Activated CD4-positive, alpha-beta memory T cell treated with anti-CD3 and anti-CD28 coated beads for 36 hours (primary cell): ENCODE measurements at regions of chr7 and their contacts with region 1.

Region 1: DNA sequence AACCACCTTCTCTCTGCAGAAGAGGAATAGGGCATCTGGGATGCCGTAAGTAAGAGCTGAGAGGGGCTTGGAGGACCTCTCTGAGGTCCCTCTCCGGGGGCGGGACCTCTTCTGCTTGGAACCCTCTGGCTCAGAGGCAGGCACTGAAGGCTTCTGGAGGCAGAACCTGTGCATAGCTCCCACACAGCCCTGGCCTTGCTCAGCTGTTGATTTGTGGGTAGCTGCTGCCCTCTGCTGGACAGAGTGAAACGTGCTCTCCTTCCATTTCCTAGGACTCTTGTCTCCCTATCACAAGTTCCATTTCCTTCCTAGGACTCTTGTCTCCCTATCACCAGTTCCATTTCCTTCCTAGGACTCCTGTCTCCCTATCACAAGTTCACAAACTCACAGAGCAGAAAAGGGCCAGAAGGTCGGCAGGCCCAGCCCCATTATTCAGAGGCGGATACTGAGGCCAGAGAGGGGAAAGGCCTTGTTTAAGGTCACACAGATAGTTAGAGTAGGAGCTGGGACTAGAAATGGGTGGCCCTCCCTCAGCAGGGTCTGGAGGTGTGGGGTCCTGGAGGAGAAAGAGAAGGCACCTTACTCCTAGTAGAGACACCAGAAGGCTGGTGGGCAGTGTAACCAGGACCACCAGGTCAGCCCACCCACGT is 30.3 kb upstream of the GARS1 start:
- DNase-seq: peak; percentile 85
- H3K4me3 Mint-ChIP-seq: no peak overlapping the region
- H3K27ac Mint-ChIP-seq: no peak overlapping the region
- H3K4me1 Mint-ChIP-seq: peaks cover 2% of the 10 kb centered on the region
- H3K27me3 Mint-ChIP-seq: no peaks in the 10 kb centered on the region

Region 2: DNA sequence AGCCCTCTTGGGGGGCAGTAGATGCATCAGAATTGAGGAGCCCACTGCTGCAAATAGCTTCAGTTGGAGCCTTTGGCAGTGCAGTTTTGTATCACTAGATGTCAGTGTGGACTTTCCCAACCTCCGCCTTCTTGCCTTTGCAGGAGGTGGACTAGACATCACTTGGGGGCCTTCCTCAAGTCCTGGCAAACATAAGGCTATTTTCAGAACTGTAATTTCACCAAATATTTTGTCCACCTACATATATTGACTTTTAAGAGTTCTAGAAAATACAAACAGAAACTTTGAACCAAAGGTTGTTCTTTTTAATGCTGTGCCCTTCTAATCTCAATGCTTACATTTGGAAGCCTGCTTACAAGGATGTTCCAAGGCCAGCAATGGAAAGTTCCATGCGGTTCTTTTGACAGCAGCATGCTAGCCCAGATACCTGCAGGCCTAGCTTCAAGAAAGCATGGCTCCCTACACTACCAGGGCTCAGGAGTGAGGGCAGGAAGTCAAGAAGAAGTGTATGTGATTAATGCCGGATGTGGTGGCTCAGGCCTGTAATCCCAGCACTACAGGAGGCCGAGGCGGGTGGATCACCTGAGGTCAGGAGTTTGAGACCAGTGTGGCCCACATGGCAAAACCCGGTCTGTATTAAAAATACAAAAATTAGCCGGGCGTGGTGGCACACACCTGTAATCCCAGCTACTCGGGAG is 288.0 kb before region 1 on chr7:
- CTCF ChIA-PET with region 1: interaction called, 36 read pairs
- POLR2A ChIA-PET with region 1: no interaction called
- intact Hi-C with region 1: loop called (anchors 1 kb)
- DNase-seq: peak; percentile 61
- H3K4me3 Mint-ChIP-seq: no peak overlapping the region
- H3K27ac Mint-ChIP-seq: no peak overlapping the region
- H3K4me1 Mint-ChIP-seq: peaks cover 5% of the 10 kb centered on the region
- H3K27me3 Mint-ChIP-seq: no peaks in the 10 kb centered on the region

Region 3: GRCh38 chr7:30478349-30479201 is 85.8 kb before region 1 on chr7 and contains the start of gene NOD1:
- CTCF ChIA-PET with region 1: interaction called, 10 read pairs
- POLR2A ChIA-PET with region 1: interaction called, 3 read pairs
- intact Hi-C with region 1: no loop called
- DNase-seq: peak; percentile 77
- H3K4me3 Mint-ChIP-seq: peak within 1 kb of the TSS; percentile 91
- H3K27ac Mint-ChIP-seq: peak within 1 kb of the TSS; percentile 85
- H3K4me1 Mint-ChIP-seq: peaks cover 51% of the 10 kb centered on the region
- H3K27me3 Mint-ChIP-seq: no peaks in the 10 kb centered on the region
- total RNA-seq, gene NOD1: 12.8 to 14.0 TPM

Region 4: DNA sequence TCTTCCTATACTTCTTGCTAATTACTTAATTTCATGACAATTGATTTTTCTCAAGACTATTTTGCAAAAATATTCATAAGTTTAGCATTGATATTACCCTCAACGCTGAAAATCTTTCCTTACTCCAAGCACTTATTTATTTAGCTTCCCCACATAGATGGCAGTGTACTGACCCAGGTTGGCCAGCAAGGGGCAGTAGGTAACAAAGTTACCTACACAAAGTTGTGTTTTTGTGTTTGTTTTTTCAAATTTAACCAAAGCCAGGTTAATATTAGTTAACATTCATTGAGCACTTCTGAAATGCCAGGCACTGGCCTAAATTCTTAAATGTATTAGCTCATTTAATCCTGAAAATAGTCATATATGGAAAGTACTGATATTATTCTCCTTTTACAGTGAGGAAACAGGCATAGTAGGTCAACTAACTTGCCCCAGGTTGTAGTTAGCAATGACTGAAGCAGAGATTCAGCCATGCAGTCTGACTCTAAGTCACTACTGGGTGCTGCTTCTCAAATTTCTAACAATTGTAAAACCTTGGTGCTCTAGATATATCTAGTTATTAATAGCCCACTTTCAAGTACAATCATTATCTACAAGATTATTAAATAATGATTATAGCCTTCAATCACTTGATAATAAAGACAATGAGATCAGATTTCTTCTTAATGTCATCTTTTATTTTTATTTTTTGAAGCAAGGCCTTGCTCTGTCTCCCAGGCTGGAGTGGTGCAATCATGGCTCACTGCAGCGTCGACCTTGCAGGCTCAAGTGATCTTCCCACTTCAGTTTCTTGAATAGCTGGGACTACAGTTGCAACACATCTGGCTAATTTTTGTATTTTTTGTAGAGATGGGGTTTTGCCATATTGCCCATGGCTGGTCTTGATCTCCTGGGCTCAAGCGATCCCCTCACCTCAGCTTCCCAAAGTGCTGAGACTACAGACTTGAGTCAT is 54.0 kb before region 1 on chr7:
- CTCF ChIA-PET with region 1: interaction called, 74 read pairs
- POLR2A ChIA-PET with region 1: no interaction called
- intact Hi-C with region 1: loop called (anchors 1 kb)
- DNase-seq: peak; percentile 46
- H3K4me3 Mint-ChIP-seq: no peak overlapping the region
- H3K27ac Mint-ChIP-seq: no peak overlapping the region
- H3K4me1 Mint-ChIP-seq: peaks cover 9% of the 10 kb centered on the region
- H3K27me3 Mint-ChIP-seq: no peaks in the 10 kb centered on the region

Region 5: DNA sequence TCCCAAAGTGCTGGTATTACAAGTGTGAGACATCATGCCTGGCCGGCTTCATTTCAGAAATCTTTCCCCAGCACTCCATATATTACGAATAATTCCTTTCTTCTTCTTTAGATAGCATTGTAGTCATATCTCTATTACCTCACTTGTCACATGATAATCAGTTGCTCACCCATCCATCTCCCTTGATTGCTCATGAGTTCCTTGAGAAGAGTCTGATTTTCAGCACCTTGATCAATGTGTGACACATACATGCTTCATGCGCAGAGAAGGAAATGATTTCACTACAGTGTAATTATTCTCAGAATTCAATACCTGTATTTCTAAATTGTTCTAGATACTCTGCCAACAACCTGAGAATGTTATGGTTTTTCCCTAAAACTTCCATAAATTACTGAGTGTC is 33.1 kb before region 1 on chr7:
- CTCF ChIA-PET with region 1: interaction called, 13 read pairs
- POLR2A ChIA-PET with region 1: no interaction called
- intact Hi-C with region 1: no loop called
- DNase-seq: no peak
- H3K4me3 Mint-ChIP-seq: no peak overlapping the region
- H3K27ac Mint-ChIP-seq: no peak overlapping the region
- H3K4me1 Mint-ChIP-seq: peaks cover 8% of the 10 kb centered on the region
- H3K27me3 Mint-ChIP-seq: no peaks in the 10 kb centered on the region

Region 6: DNA sequence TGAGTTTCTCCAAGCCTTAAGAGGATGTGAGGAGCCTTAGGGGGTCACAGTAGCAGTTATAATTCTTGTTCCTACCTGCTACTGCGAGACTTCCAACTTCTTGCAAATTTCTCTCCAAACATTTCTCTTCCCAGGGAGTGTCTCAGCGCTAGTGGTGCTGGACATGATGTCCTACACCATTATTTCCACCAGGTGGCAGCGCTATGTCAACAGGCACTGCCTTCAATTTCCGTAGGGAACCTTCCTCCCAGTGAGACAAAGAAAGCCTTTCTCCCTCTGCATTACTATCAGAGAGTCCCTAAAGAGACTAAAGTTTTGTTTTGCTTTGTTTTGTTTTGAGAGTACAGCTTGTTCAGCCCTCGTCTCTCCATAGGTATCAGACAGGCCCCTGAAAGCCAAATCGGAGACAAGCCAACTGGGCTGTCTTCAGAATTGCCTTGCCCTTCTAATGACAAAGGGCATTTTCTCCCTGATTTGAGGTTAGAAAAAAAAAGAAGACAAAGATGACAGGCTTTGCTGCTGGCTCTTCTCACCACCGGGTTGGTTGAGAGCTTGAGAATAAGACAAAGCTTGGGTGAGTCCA is 15.5 kb before region 1 on chr7:
- CTCF ChIA-PET with region 1: interaction called, 114 read pairs
- POLR2A ChIA-PET with region 1: no interaction called
- intact Hi-C with region 1: loop called (anchors 2 kb)
- DNase-seq: peak; percentile 51
- H3K4me3 Mint-ChIP-seq: no peak overlapping the region
- H3K27ac Mint-ChIP-seq: no peak overlapping the region
- H3K4me1 Mint-ChIP-seq: no peaks in the 10 kb centered on the region
- H3K27me3 Mint-ChIP-seq: no peaks in the 10 kb centered on the region